Lower leg skin (tissue), 4 donors: ENCODE measurements at regions of chr1 and their contacts with region 1.

Region 1: DNA sequence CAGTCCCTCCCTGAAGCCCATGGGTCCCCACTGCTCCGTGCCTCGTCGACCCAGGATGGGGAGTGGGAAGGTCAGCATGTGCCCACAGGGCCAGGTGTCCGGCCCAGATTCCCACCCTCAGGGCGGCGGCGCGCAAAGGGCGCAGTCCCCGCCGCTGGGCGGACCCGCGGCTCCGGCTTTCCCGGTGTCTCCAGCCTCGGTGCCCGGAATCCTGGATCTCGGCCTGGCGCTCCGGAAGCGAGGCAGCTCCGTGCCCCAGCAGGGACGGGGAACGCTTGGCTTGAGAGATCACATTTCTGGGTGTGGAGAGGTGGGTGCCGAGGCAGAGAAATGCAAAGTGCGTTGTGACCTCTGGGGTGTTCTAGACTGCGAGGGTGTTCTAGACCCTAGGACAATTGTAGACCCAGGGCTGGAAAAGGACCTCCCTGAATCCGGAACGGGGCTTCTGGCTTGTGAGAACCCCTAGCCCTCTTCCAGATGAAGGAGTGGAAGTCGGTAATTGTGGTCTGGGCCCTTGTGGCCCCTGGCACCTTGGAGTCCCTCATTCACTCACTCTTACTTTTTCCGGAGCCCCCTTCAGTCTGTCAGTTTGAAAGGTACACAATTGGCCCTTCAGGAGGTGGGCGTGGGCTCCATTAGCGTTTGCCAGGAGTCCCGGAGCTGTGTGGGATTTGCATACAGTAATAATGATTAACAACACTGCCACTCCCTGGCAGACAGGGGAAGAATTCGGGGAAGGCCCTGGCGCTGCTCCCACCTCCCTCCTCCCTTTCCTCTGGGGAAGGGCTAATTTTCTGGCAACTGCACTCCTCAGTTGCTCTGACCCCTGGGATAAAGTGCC is 1.6 kb upstream of the KCND3 start:
- DNase-seq: peak; percentile 40 to 92
- H3K4me3 ChIP-seq: peak overlapping the region; percentile 44
- CTCF ChIP-seq: no peak
- POLR2A ChIP-seq: no peak

Region 2: DNA sequence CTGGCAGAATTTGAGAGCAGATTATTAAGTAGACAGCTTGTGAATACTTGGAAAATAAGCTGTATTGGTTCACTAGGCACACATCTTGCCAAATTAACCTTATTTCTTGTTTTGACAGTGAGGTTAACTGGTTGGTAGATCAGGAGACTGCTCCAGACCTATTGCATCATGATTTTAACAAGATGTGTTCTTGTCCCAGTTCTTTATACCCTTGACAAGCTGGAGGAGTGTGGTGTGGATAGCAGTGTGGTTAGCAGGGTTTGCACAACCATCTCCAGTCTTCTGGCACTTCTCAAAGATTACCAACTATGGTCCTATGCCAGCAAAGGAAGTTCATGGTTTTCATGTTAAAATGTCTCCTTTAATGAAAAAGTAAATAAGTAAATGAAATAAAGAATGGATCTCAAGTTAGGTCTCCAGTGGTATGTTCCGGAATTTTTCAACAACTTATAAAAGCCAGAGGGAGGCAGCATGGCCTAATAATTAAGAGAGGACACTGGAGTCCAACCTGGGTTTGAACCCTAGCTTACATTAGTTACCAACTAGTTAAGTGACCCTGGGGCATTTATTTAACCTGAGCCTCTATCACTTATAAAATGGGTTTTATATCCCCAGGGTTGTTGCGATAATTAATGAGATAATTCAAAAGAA is 201.3 kb before region 1 on chr1:
- intact Hi-C with region 1: loop called (anchors 10 kb)
- DNase-seq: no peak
- H3K4me3 ChIP-seq: no peak overlapping the region
- CTCF ChIP-seq: no peak
- POLR2A ChIP-seq: no peak